ENCODE measurements at regions of chr20 and their contacts with region 1.

Region 1: DNA sequence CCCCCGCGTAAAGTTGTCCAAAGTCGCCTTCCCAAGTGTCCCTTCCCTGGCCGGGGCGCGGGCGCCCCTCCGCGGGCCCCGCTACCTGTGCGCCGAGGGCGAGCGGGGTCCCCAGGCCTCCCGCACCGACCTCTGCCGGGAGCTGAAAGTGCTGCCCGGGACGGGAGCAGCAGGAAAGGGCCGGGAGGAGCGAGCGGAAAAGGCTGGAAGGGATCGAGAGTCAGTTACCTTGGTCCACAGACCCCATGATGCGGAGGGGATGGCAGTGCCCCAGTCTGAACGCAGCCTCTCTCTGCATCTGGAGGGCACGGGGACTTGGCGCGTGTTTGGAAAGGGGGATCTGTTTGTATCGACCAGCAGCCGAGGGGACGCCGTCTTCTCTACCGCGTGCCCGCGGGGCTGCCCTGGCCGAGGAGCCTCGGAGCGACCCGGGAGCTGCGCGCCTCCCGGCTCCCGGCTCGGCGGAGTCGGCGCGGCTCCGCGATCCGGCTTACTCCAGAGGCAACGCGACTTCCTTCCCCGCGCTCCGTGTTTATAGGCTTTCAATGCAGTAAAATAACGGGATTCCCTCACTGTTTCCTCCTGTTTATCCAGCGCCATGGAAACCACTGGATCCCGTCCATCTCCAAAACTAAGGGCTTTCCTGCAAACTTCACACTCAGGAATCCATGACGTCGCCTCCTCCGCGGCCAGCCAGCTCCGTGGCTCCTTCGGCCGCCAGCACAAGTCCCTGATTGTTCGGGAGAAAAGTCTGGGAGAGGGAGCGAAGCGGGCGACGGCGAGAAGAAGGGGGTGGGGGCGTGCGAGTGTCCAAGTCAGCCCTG is 20.0 kb upstream of the NFATC2 start:
- DNase-seq: peak; percentile 93 to 94
- H3K4me3 ChIP-seq: peak overlapping the region; percentile 44 to 55
- H3K27ac ChIP-seq: peak overlapping the region; percentile 93 to 94
- H3K4me1 ChIP-seq: peaks cover 8 to 9% of the 10 kb centered on the region in 2 donors
- H3K27me3 ChIP-seq: no peaks in the 10 kb centered on the region
- CTCF ChIP-seq: peak in 1 of 4 experiments; percentile 7
- POLR2A ChIP-seq: peak; percentile 8 to 67

Region 2: GRCh38 chr20:51447097-51447771 is 115.3 kb before region 1 on chr20:
- intact Hi-C with region 1: loop called (anchors 5 kb)
- DNase-seq: peak; percentile 91 to 93
- H3K4me3 ChIP-seq: no peak overlapping the region
- H3K27ac ChIP-seq: peak overlapping the region; percentile 64 to 67
- H3K4me1 ChIP-seq: peaks cover 15 to 29% of the 10 kb centered on the region in 2 donors
- H3K27me3 ChIP-seq: no peaks in the 10 kb centered on the region
- CTCF ChIP-seq: peak in 1 of 4 experiments; percentile 24
- POLR2A ChIP-seq: no peak

Measured in uterus (tissue), 4 donors.